Posterior cingulate gyrus (tissue), 11 donors: ENCODE measurements at regions of chr4 and their contacts with region 1.

Region 1: GRCh38 chr4:143513306-143514168 is at the start of gene SMARCA5:
- DNase-seq: peak; percentile 90 to 99 (median 91)

Region 2: DNA sequence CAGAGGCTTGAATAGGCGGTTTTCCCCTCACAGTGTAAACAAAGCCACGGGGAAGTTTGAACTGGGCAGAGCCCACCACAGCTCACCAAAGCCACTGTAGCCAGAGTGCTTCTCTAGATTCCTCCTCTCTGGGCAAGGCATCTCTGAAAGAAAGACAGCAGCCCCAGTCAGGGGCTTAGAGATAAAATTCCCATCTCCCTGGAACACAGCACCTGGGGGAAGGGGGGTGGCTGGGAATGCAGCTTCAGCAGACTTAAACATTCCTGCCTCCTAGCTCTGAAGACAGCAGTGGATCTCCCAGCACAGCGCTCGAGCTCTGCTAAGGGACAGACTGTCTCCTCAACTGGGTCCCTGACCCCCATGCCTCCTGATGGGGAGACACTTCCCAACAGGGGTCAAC is 372.8 kb before region 1 on chr4:
- intact Hi-C with region 1: no loop called
- DNase-seq: peak in 2 of 10 donors; percentile 33 to 49

Region 3: GRCh38 chr4:143184217-143185116 is 329.1 kb before region 1 on chr4 and contains the start of gene USP38:
- intact Hi-C with region 1: loop called (anchors 10 kb)
- DNase-seq: peak; percentile 87 to 99 (median 90)

Region 4: DNA sequence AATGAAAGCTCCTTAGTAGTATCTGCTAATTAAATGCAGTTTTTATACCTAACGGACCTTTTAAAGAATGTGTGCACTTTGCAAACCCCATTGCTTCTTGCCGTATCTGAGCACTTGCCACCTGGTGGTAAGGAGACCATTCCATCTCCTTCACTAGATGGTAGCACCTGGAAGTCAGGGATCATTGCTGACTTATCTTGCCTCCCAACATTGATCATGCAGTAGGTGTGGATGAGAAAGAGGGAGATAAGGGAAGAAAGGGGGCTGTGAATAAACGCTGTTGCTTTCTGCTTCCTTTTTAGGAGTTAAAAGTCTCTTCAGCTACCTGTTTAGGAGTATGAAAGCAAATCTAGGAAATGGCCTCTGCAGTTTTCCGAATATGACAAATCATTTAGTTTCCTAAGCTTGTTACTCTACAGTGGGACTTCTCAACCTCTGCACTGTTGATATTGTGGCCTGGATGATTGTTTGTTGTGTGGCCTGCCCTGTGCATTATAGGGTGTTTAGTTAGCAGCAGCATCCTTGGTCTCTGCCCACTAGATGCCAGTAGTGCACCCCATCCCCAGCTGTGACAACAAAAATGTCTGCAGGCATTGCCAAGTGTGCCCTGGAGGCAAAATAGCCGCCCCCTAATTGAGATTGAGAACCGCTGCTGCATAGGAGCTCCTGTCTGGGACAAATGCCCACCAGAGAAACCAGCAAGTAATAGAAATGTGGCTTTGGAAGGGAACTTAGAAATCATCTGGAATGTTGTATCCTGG is 138.0 kb before region 1 on chr4:
- intact Hi-C with region 1: loop called (anchors 10 kb)
- DNase-seq: peak; percentile 46 to 94 (median 66)

Region 5: GRCh38 chr4:143538979-143539669 is 25.6 kb after region 1 on chr4:
- intact Hi-C with region 1: no loop called
- DNase-seq: no peak